Mammary epithelial cell (primary cell): ENCODE measurements at regions of chr20 and their contacts with region 1.

Region 1: GRCh38 chr20:3679749-3680700 is 1.8 kb downstream of the ADAM33 start:
- DNase-seq: no peak
- H3K4me3 ChIP-seq: no peak overlapping the region
- H3K27ac ChIP-seq: no peak overlapping the region
- H3K4me1 ChIP-seq: peaks cover 3% of the 10 kb centered on the region
- H3K27me3 ChIP-seq: peaks cover 22% of the 10 kb centered on the region
- CTCF ChIP-seq: no peak

Region 2: GRCh38 chr20:3632311-3633004 is 47.6 kb before region 1 on chr20:
- CTCF ChIA-PET with region 1: no interaction called
- dilution Hi-C with region 1: no loop called
- in situ Hi-C with region 1: no loop called
- intact Hi-C with region 1: no loop called
- DNase-seq: no peak
- H3K4me3 ChIP-seq: no peak overlapping the region
- H3K27ac ChIP-seq: no peak overlapping the region
- H3K4me1 ChIP-seq: no peaks in the 10 kb centered on the region
- H3K27me3 ChIP-seq: no peaks in the 10 kb centered on the region
- CTCF ChIP-seq: no peak

Region 3: DNA sequence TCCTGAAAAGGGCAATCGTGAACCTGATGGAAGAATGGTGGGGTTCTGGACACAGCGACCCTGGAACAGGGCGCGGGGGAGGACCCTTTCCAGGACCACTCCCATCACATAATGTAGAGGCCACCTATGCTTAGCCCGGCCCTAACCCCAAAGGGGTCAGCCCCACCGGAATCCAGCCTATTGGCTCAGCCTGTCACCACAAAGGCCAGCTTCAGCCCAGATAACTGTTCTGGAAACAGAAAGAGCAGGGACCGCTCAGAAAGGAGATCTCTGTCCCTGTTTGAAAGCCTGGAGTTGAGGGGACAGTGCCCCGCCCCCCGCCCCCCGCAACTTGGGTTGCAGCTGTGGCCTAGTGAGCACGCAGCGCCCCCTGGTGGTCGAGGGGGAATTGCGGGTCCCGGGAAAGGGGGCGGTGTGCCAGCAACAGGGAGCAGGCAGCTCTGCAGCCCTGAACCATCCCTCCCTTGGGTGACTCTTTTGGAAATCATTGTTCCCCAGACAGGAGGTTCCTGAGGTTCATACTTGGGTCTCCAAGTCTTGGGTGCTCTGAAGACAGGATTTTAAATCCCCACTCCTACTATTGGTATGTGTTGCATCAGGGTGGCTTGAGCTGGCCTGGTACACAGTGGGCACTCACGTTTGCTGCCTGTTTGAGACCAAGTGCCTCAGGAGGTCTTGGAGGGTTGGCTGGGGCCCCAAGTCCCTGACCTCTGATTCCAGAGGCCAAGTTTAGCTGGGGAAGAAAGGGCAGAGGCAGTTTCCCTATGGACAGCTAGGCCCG is 30.9 kb after region 1 on chr20:
- CTCF ChIA-PET with region 1: interaction called, 5 read pairs
- dilution Hi-C with region 1: no loop called
- in situ Hi-C with region 1: no loop called
- intact Hi-C with region 1: loop called (anchors 1 kb)
- DNase-seq: peak; percentile 21
- H3K4me3 ChIP-seq: no peak overlapping the region
- H3K27ac ChIP-seq: no peak overlapping the region
- H3K4me1 ChIP-seq: no peaks in the 10 kb centered on the region
- H3K27me3 ChIP-seq: no peaks in the 10 kb centered on the region
- CTCF ChIP-seq: peak; percentile 76 to 89

Region 4: GRCh38 chr20:3767427-3768341 is 87.7 kb after region 1 on chr20 and contains the start of gene ADISSP:
- CTCF ChIA-PET with region 1: no interaction called
- dilution Hi-C with region 1: no loop called
- in situ Hi-C with region 1: no loop called
- intact Hi-C with region 1: loop called (anchors 5 kb)
- DNase-seq: peak; percentile 98
- H3K4me3 ChIP-seq: peak within 1 kb of the TSS; percentile 59 to 95 (median 77)
- H3K27ac ChIP-seq: peak within 1 kb of the TSS; percentile 79
- H3K4me1 ChIP-seq: peaks cover 19% of the 10 kb centered on the region
- H3K27me3 ChIP-seq: no peaks in the 10 kb centered on the region
- CTCF ChIP-seq: no peak
- total RNA-seq, gene ADISSP: 14.0 to 59.9 TPM

Region 5: GRCh38 chr20:3846740-3847428 is 166.9 kb after region 1 on chr20 and contains the start of gene MAVS:
- CTCF ChIA-PET with region 1: no interaction called
- dilution Hi-C with region 1: no loop called
- in situ Hi-C with region 1: no loop called
- intact Hi-C with region 1: loop called (anchors 10 kb)
- DNase-seq: peak; percentile 73
- H3K4me3 ChIP-seq: peak within 1 kb of the TSS; percentile 89 to 92 (median 90)
- H3K27ac ChIP-seq: peak within 1 kb of the TSS; percentile 56
- H3K4me1 ChIP-seq: peaks cover 10% of the 10 kb centered on the region
- H3K27me3 ChIP-seq: no peaks in the 10 kb centered on the region
- CTCF ChIP-seq: peak in 1 of 2 donors; percentile 3
- total RNA-seq, gene MAVS: 27.7 to 37.9 TPM

Region 6: DNA sequence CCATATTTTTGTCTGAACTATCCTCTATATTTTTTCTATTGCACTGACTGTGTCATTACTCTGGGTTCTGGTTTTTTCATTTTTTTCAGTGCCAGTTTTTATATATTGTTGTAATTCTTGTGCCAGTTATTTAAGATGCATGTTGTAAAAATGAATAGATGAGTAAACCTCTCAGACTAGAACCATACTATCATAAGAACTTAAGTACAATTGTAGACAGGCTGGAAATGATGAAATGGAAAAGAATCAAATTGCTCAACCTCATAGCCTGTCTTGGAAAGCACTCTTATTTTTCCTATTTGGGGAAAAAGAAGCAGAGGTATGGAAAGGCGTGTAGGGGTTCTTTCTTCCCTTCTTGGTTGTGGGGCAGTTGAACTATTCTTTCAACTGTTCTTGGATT is 239.3 kb after region 1 on chr20:
- CTCF ChIA-PET with region 1: no interaction called
- dilution Hi-C with region 1: no loop called
- in situ Hi-C with region 1: no loop called
- intact Hi-C with region 1: no loop called
- DNase-seq: no peak
- H3K4me3 ChIP-seq: no peak overlapping the region
- H3K27ac ChIP-seq: no peak overlapping the region
- H3K4me1 ChIP-seq: peaks cover 19% of the 10 kb centered on the region
- H3K27me3 ChIP-seq: no peaks in the 10 kb centered on the region
- CTCF ChIP-seq: no peak

Region 7: GRCh38 chr20:4082406-4083097 is 402.5 kb after region 1 on chr20:
- CTCF ChIA-PET with region 1: no interaction called
- dilution Hi-C with region 1: no loop called
- in situ Hi-C with region 1: no loop called
- intact Hi-C with region 1: loop called (anchors 2 kb)
- DNase-seq: peak; percentile 79
- H3K4me3 ChIP-seq: no peak overlapping the region
- H3K27ac ChIP-seq: peak overlapping the region; percentile 70
- H3K4me1 ChIP-seq: peaks cover 18% of the 10 kb centered on the region
- H3K27me3 ChIP-seq: no peaks in the 10 kb centered on the region
- CTCF ChIP-seq: no peak